Dorsolateral prefrontal cortex (tissue), 120 donors: ENCODE measurements at regions of chr11 and their contacts with region 1.

Region 1: GRCh38 chr11:98589967-98590366 is 430.8 kb upstream of the CNTN5 start:
- DNase-seq: no peak
- H3K4me3 ChIP-seq: no peak overlapping the region
- H3K27ac ChIP-seq: no peak overlapping the region
- H3K27me3 ChIP-seq: no peaks in the 10 kb centered on the region
- CTCF ChIP-seq: no peak

Region 2: GRCh38 chr11:98545544-98546175 is 44.3 kb before region 1 on chr11:
- intact Hi-C with region 1: loop called in 1 of 2 experiments (anchors 2 kb)
- DNase-seq: no peak
- H3K4me3 ChIP-seq: no peak overlapping the region
- H3K27ac ChIP-seq: no peak overlapping the region
- H3K27me3 ChIP-seq: no peaks in the 10 kb centered on the region
- CTCF ChIP-seq: no peak

Region 3: GRCh38 chr11:98659431-98659830 is 69.5 kb after region 1 on chr11:
- intact Hi-C with region 1: no loop called
- DNase-seq: no peak
- H3K4me3 ChIP-seq: no peak overlapping the region
- H3K27ac ChIP-seq: no peak overlapping the region
- H3K27me3 ChIP-seq: no peaks in the 10 kb centered on the region
- CTCF ChIP-seq: no peak

Region 4: DNA sequence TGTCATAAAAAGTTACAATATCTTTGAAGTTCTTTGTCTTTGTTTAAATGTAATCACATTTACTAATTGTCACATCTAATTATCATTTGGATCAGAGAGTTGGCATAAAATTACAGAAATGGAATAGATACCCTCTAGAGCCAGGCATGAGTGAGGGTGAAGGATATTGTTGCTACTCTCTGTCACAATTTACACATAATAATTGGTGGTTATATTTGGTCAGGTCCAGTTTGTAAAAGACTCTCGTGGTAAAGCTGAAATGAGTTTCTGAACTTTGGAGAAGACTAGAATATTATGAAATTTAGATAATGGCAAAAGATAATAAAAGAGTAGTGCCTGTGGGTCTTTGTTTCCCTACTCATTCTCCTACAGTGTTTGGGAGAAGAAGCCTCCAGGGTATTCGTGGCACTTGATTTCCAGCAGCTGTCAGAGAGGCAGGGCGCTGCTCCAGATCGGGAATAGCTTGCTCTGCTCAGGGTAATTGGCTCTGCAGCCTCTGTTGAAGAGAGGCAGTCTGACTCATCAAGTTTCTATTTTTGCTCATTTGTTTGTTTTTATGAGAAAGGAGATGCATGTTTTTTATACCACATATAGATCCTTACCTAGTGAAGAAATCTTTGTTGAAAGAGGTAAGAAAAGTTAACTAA is 780.7 kb after region 1 on chr11:
- intact Hi-C with region 1: no loop called
- DNase-seq: peak in 6 of 10 donors; percentile 4 to 61 (median 48)
- H3K4me3 ChIP-seq: peak overlapping the region in 1 of 59 donors; percentile 29
- H3K27ac ChIP-seq: no peak overlapping the region
- H3K27me3 ChIP-seq: no peaks in the 10 kb centered on the region
- CTCF ChIP-seq: no peak